ENCODE measurements at regions of chr12 and their contacts with region 1.

Region 1: GRCh38 chr12:114508529-114509129 is 102.7 kb upstream of the TBX5 start:
- DNase-seq: peak in 1 of 2 donors; percentile 42
- ATAC-seq: peak in 2 of 4 donors; percentile 35 to 69
- H3K4me3 ChIP-seq: no peak overlapping the region
- H3K27ac ChIP-seq: no peak overlapping the region
- H3K4me1 ChIP-seq: no peaks in the 10 kb centered on the region
- H3K27me3 ChIP-seq: peaks cover 2 to 13% (median 10%) of the 10 kb centered on the region in 3 donors
- CTCF ChIP-seq: peak; percentile 70

Region 2: GRCh38 chr12:113965951-113966797 is 542.5 kb before region 1 on chr12 and contains the start of gene RBM19:
- intact Hi-C with region 1: loop called (anchors 2 to 5 kb)
- DNase-seq: peak; percentile 96 to 99
- ATAC-seq: peak; percentile 100
- H3K4me3 ChIP-seq: peak within 1 kb of the TSS; percentile 92
- H3K27ac ChIP-seq: peak within 1 kb of the TSS; percentile 69
- H3K4me1 ChIP-seq: peaks cover 8% of the 10 kb centered on the region
- H3K27me3 ChIP-seq: no peaks in the 10 kb centered on the region
- CTCF ChIP-seq: peak; percentile 93
- total RNA-seq, gene RBM19: 16.0 to 28.6 (median 21.5) TPM

Region 3: DNA sequence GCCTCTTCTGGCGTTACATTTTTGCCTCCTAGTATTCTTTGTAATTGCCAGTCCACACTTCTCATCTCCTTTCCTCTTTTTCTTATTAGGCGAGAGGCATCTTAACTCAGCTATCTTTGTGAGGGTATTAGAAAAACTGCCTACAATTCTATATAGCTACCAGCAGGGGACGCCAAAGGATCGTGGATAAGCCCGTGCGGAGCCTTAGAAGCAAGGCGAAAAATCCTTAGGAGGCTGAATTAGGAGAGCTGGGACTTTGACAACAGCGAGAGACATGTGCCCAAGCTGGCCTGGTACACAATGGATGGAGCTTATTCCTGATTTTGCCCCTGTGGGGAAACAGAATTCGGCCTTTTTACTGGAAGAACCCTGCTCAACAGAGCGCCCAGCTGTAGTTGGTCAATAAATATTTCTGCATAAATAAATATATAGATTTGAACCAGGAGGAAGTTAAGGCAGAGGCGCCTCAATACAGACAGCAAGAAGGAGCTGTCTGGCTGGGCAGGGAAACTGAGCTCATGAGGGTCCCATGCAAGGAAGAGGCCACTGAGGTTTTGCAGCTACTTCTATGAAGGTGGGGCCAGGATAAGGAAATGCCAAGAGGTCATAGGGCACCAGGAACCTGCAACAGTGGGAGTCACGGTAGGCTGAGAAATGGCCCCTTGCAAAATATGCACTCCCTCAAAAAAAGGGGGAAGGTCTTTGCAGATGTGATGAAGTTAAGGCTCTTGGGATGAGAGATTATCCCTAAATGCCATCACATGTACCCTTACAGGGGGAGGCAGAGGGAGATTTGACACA is 527.9 kb before region 1 on chr12:
- intact Hi-C with region 1: loop called (anchors 5 kb)
- DNase-seq: no peak
- ATAC-seq: no peak
- H3K4me3 ChIP-seq: no peak overlapping the region
- H3K27ac ChIP-seq: no peak overlapping the region
- H3K4me1 ChIP-seq: no peaks in the 10 kb centered on the region
- H3K27me3 ChIP-seq: peaks cover 0 to 24% (median 3%) of the 10 kb centered on the region in 3 donors
- CTCF ChIP-seq: peak; percentile 75

Region 4: GRCh38 chr12:114473717-114474116 is 34.9 kb before region 1 on chr12:
- intact Hi-C with region 1: no loop called
- DNase-seq: no peak
- ATAC-seq: no peak
- H3K4me3 ChIP-seq: no peak overlapping the region
- H3K27ac ChIP-seq: no peak overlapping the region
- H3K4me1 ChIP-seq: no peaks in the 10 kb centered on the region
- H3K27me3 ChIP-seq: peaks cover 2 to 12% (median 7%) of the 10 kb centered on the region in 3 donors
- CTCF ChIP-seq: no peak